ENCODE measurements at regions of chrX and their contacts with region 1.

Region 1: GRCh38 chrX:13487731-13488523 is 81.5 kb upstream of the EGFL6 start:
- DNase-seq: peak; percentile 84
- H3K4me3 Mint-ChIP-seq: no peak overlapping the region
- H3K27ac Mint-ChIP-seq: peak overlapping the region; percentile 96
- H3K4me1 Mint-ChIP-seq: peaks cover 36% of the 10 kb centered on the region
- H3K27me3 Mint-ChIP-seq: no peaks in the 10 kb centered on the region
- CTCF ChIP-seq: peak; percentile 73

Region 2: GRCh38 chrX:12814420-12814819 is 673.5 kb before region 1 on chrX:
- CTCF ChIA-PET with region 1: interaction called, 17 read pairs
- POLR2A ChIA-PET with region 1: interaction called, 6 read pairs
- intact Hi-C with region 1: loop called (anchors 1 kb)
- DNase-seq: peak; percentile 64
- H3K4me3 Mint-ChIP-seq: no peak overlapping the region
- H3K27ac Mint-ChIP-seq: no peak overlapping the region
- H3K4me1 Mint-ChIP-seq: peaks cover 5% of the 10 kb centered on the region
- H3K27me3 Mint-ChIP-seq: peaks cover 21% of the 10 kb centered on the region
- CTCF ChIP-seq: peak; percentile 57

Region 3: GRCh38 chrX:12974796-12975669 is 512.9 kb before region 1 on chrX and contains the start of gene TMSB4X:
- CTCF ChIA-PET with region 1: interaction called, 7 read pairs
- POLR2A ChIA-PET with region 1: interaction called, 20 read pairs
- intact Hi-C with region 1: loop called (anchors 1 kb)
- DNase-seq: peak; percentile 75
- H3K4me3 Mint-ChIP-seq: peak within 1 kb of the TSS; percentile 88
- H3K27ac Mint-ChIP-seq: peak within 1 kb of the TSS; percentile 84
- H3K4me1 Mint-ChIP-seq: peaks cover 8% of the 10 kb centered on the region
- H3K27me3 Mint-ChIP-seq: peaks cover 18% of the 10 kb centered on the region
- CTCF ChIP-seq: no peak
- total RNA-seq, gene TMSB4X: 801 and 901 TPM in 2 replicates

Region 4: GRCh38 chrX:13110433-13111324 is 377.2 kb before region 1 on chrX:
- CTCF ChIA-PET with region 1: interaction called, 3 read pairs
- POLR2A ChIA-PET with region 1: interaction called, 4 read pairs
- intact Hi-C with region 1: loop called (anchors 1 kb)
- DNase-seq: peak; percentile 92
- H3K4me3 Mint-ChIP-seq: no peak overlapping the region
- H3K27ac Mint-ChIP-seq: peak overlapping the region; percentile 76
- H3K4me1 Mint-ChIP-seq: peaks cover 10% of the 10 kb centered on the region
- H3K27me3 Mint-ChIP-seq: no peaks in the 10 kb centered on the region
- CTCF ChIP-seq: no peak

Region 5: GRCh38 chrX:13254076-13254785 is 233.7 kb before region 1 on chrX:
- CTCF ChIA-PET with region 1: interaction called, 19 read pairs
- POLR2A ChIA-PET with region 1: interaction called, 7 read pairs
- intact Hi-C with region 1: loop called (anchors 1 kb)
- DNase-seq: peak; percentile 76
- H3K4me3 Mint-ChIP-seq: no peak overlapping the region
- H3K27ac Mint-ChIP-seq: no peak overlapping the region
- H3K4me1 Mint-ChIP-seq: no peaks in the 10 kb centered on the region
- H3K27me3 Mint-ChIP-seq: peaks cover 27% of the 10 kb centered on the region
- CTCF ChIP-seq: no peak

Region 6: DNA sequence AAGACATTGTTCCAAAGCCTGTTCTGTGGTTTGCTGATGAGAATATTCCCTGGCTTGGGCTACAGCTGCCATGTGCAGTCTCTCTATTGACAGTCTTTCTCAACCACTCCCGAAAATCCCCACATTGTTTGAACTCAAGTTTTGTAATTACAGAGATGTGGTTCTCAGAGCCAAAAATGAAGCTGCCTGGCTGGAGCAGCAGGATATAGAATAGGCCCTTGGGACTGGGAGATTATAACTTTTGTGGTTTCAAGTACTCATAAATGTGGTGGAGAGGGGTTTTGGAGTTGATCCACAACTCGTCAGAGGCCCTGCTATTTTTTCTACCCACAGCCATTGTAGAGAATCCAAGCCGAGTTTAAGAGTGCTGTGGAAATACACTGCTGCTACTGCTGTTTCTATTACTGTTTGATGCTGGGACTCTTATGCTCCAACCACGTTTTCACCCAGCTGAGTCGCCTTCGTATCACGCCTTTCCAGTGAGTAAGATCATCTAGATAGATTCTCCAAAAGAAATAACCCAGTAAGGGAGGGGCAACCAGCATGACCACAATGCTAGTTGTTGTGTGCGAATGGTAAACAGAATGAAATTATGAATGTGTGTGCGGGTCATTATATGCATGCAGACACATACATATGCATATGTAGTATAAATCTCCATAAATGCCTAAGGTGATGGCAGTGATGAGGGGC is 110.9 kb before region 1 on chrX:
- CTCF ChIA-PET with region 1: interaction called, 5 read pairs
- POLR2A ChIA-PET with region 1: no interaction called
- intact Hi-C with region 1: loop called (anchors 5 kb)
- DNase-seq: peak; percentile 86
- H3K4me3 Mint-ChIP-seq: no peak overlapping the region
- H3K27ac Mint-ChIP-seq: peak overlapping the region; percentile 76
- H3K4me1 Mint-ChIP-seq: peaks cover 15% of the 10 kb centered on the region
- H3K27me3 Mint-ChIP-seq: peaks cover 3% of the 10 kb centered on the region
- CTCF ChIP-seq: no peak

Region 7: GRCh38 chrX:13428055-13428786 is 59.7 kb before region 1 on chrX:
- CTCF ChIA-PET with region 1: interaction called, 10 read pairs
- POLR2A ChIA-PET with region 1: interaction called, 7 read pairs
- intact Hi-C with region 1: loop called (anchors 1 kb)
- DNase-seq: peak; percentile 96
- H3K4me3 Mint-ChIP-seq: no peak overlapping the region
- H3K27ac Mint-ChIP-seq: peak overlapping the region; percentile 37
- H3K4me1 Mint-ChIP-seq: peaks cover 28% of the 10 kb centered on the region
- H3K27me3 Mint-ChIP-seq: no peaks in the 10 kb centered on the region
- CTCF ChIP-seq: no peak

Measured in MCF 10A (cell line).